ENCODE measurements at regions of chr4 and their contacts with region 1.

Region 1: GRCh38 chr4:127732613-127733328 is 2.6 kb downstream of the SLC25A31 start:
- DNase-seq: no peak
- ATAC-seq: no peak
- H3K4me3 ChIP-seq: no peak overlapping the region
- H3K27ac ChIP-seq: no peak overlapping the region
- H3K4me1 ChIP-seq: no peaks in the 10 kb centered on the region
- H3K27me3 ChIP-seq: no peaks in the 10 kb centered on the region
- CTCF ChIP-seq: peak; percentile 27 to 65 (median 62)
- POLR2A ChIP-seq: no peak

Region 2: GRCh38 chr4:127604949-127605709 is 127.6 kb before region 1 on chr4:
- intact Hi-C with region 1: loop called (anchors 5 kb)
- DNase-seq: no peak
- ATAC-seq: no peak
- H3K4me3 ChIP-seq: no peak overlapping the region
- H3K27ac ChIP-seq: no peak overlapping the region
- H3K4me1 ChIP-seq: no peaks in the 10 kb centered on the region
- H3K27me3 ChIP-seq: peaks cover 0 to 7% of the 10 kb centered on the region in 2 donors
- CTCF ChIP-seq: peak; percentile 40 to 64 (median 59)
- POLR2A ChIP-seq: no peak

Region 3: DNA sequence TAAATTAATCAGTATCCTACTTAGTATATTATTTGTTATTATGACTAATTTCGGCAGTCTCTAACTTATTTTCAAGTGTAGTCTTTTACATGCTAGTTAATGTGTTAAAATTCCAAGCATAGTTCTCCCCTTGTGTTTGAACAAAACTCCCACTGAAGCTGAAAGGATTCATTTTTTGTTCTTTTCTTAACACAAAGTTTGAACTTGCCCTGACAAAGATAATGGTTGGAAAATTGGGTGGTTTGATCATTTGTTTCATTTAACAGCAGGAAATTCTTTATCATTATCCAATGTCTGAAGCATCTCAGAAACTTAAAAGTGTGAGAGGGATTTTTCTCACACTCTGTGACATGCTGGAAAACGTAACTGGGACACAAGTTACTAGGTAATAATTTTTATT is 64.0 kb before region 1 on chr4:
- intact Hi-C with region 1: no loop called
- DNase-seq: no peak
- ATAC-seq: no peak
- H3K4me3 ChIP-seq: no peak overlapping the region
- H3K27ac ChIP-seq: no peak overlapping the region
- H3K4me1 ChIP-seq: no peaks in the 10 kb centered on the region
- H3K27me3 ChIP-seq: no peaks in the 10 kb centered on the region
- CTCF ChIP-seq: no peak
- POLR2A ChIP-seq: no peak

Region 4: DNA sequence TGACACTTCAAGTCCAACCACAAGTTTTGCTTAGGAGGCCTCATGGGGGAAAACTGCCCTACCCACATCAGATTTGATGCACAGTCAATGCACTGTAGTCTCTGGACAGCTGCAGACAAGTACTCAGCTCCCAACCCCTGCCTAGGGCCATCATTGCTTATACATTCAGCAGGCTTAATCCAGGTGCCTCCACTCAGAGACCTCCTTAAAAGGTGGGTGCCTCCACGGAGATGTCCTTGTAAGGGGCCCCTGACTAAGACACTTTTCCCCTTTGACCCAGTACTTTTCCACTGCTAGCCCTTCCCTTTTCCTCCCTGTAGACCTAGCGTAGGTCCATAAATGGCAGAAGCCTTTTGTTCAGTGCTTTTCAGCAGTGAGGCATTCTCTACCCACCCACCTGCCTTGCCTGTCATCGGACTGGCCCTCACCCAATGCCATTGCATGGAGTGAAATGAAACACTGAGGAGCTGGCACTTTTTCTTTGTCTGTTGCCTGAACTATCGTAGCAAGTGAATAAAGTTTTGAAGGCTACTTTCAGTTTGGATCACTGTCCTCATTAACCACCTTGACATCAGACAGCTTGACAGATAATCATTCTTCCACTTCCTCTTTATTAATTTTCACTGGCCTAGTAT is 124.2 kb after region 1 on chr4:
- intact Hi-C with region 1: no loop called
- DNase-seq: no peak
- ATAC-seq: no peak
- H3K4me3 ChIP-seq: no peak overlapping the region
- H3K27ac ChIP-seq: no peak overlapping the region
- H3K4me1 ChIP-seq: peaks cover 9% of the 10 kb centered on the region
- H3K27me3 ChIP-seq: no peaks in the 10 kb centered on the region
- CTCF ChIP-seq: no peak
- POLR2A ChIP-seq: no peak

Region 5: DNA sequence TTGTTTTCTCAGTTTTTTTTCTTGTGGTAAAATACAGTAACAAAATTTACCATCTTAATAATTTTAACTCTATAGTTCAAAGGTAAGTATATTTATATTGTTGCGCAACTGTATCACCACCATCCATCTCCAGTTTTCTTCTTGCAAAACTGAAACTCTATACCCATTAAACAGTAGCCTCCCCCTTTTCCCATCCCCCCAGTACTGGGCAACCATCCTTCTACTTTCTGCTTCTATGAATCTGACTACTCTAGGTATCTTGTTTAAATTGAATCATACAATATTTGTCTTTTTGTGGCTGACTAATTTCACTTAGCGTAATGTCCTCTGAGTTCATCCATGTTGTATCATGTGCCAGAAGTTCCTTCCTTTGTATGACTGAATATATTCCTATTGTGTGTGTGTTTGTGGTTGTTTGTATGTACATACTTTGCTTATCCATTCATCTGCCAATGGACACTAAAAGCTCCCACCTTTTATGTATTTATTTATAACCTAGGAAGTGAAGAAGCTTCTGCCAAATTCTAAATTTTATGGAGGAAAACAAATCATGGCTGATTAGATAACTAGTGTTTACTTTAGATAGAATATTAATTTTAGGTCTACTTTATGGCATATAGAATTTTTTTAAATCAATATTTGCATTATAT is 242.5 kb after region 1 on chr4:
- intact Hi-C with region 1: no loop called
- DNase-seq: no peak
- ATAC-seq: no peak
- H3K4me3 ChIP-seq: no peak overlapping the region
- H3K27ac ChIP-seq: no peak overlapping the region
- H3K4me1 ChIP-seq: peaks cover 5% of the 10 kb centered on the region
- H3K27me3 ChIP-seq: no peaks in the 10 kb centered on the region
- CTCF ChIP-seq: no peak
- POLR2A ChIP-seq: no peak